ENCODE measurements at regions of chr1 and their contacts with region 1.

Region 1: GRCh38 chr1:62746085-62746808 is 37.7 kb upstream of the ATG4C start:
- DNase-seq: peak; percentile 58
- H3K4me3 ChIP-seq: no peak overlapping the region
- H3K27ac ChIP-seq: no peak overlapping the region
- H3K4me1 ChIP-seq: no peaks in the 10 kb centered on the region
- H3K27me3 ChIP-seq: no peaks in the 10 kb centered on the region
- CTCF ChIP-seq: peak; percentile 30 to 31
- POLR2A ChIP-seq: no peak

Region 2: DNA sequence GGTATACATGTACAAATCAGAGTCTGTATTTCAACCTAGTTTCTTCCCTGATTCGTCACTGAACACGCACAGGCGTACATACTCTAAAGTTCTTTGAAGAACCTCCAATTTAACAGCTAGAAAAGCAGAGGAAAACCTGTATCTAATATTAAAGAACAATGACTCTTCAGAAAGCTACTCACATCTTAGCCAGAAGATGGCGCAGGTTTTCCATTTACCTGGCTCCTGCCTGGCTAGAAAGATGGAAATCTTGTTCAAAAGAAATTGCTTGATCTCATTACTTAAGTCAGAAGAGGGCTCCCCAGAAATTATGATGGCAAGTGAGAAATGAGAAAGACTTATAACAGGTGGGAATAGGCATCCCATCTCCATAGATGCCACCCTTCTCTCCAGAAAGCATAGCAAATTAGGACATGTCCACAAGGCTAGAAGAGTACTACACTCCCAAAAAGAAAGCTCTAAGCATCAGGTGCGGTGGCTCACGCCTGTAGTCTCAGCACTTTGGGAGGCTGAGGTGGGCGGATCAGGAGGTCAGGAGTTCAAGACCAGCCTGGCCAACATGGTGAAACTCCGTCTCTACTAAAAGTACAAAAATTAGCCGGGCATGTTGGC is 570.6 kb before region 1 on chr1:
- CTCF ChIA-PET with region 1: interaction called, 109 read pairs
- POLR2A ChIA-PET with region 1: no interaction called
- dilution Hi-C with region 1: no loop called
- intact Hi-C with region 1: loop called (anchors 1 kb)
- DNase-seq: peak; percentile 49
- H3K4me3 ChIP-seq: no peak overlapping the region
- H3K27ac ChIP-seq: no peak overlapping the region
- H3K4me1 ChIP-seq: no peaks in the 10 kb centered on the region
- H3K27me3 ChIP-seq: no peaks in the 10 kb centered on the region
- CTCF ChIP-seq: peak; percentile 51 to 67
- POLR2A ChIP-seq: no peak

Region 3: DNA sequence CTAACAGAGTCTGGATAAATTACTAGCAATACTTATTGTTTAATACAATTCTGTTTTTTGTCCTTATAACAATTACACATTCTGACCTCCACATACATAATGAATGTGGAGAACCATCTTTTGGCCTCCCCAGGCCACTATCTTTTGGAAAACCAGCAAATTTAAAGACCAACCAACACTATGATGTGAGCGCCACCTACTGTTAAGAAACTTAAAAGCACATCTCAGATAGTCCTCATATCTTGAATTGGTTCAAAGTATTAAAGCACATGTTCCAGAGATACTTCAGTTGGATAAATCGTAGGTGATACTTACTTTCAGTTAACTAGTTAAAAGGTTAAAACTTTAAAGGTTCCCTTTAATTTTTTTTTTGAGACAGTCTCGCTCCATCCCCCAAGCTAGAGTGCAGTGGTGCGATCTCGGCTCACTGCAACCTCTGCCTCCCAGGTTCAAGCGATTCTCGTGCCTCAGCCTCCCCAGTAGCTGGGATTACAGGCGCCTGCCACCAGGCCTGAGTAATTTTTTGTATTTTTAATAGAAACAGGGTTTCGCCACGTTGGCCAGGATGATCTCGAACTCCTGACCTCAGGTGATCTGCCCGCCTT is 338.7 kb before region 1 on chr1:
- CTCF ChIA-PET with region 1: interaction called, 8 read pairs
- POLR2A ChIA-PET with region 1: no interaction called
- dilution Hi-C with region 1: no loop called
- intact Hi-C with region 1: loop called (anchors 1 kb)
- DNase-seq: peak; percentile 46
- H3K4me3 ChIP-seq: no peak overlapping the region
- H3K27ac ChIP-seq: no peak overlapping the region
- H3K4me1 ChIP-seq: no peaks in the 10 kb centered on the region
- H3K27me3 ChIP-seq: no peaks in the 10 kb centered on the region
- CTCF ChIP-seq: peak; percentile 55 to 56
- POLR2A ChIP-seq: no peak

Region 4: GRCh38 chr1:62508187-62508758 is 238.0 kb before region 1 on chr1:
- CTCF ChIA-PET with region 1: interaction called, 195 read pairs
- POLR2A ChIA-PET with region 1: no interaction called
- dilution Hi-C with region 1: no loop called
- intact Hi-C with region 1: loop called (anchors 1 kb)
- DNase-seq: peak; percentile 56
- H3K4me3 ChIP-seq: no peak overlapping the region
- H3K27ac ChIP-seq: no peak overlapping the region
- H3K4me1 ChIP-seq: no peaks in the 10 kb centered on the region
- H3K27me3 ChIP-seq: no peaks in the 10 kb centered on the region
- CTCF ChIP-seq: peak; percentile 31 to 46
- POLR2A ChIP-seq: no peak

Region 5: DNA sequence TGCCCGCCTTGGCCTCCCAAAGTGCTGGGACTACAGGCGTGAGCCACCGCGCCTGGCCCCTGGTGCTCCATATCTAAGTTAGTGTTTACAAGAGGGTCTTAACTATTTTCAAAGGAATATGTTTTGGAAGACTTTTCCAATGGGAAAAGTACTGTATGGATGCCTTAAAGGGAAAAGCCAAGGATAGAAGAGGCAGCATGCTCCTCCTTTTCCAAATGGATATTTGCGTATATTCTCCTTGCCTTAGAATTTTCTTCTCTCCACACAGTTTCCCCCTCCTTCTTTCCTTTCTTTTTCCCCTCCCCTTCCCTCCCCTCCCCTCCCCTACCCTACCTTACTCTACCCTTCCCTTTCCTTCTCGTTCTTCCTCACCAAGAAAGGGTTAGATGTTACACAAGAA is 28.8 kb before region 1 on chr1:
- CTCF ChIA-PET with region 1: no interaction called
- POLR2A ChIA-PET with region 1: no interaction called
- dilution Hi-C with region 1: no loop called
- intact Hi-C with region 1: no loop called
- DNase-seq: no peak
- H3K4me3 ChIP-seq: no peak overlapping the region
- H3K27ac ChIP-seq: no peak overlapping the region
- H3K4me1 ChIP-seq: peaks cover 5% of the 10 kb centered on the region
- H3K27me3 ChIP-seq: peaks cover 2 to 6% of the 10 kb centered on the region in 2 experiments
- CTCF ChIP-seq: no peak
- POLR2A ChIP-seq: no peak

Region 6: GRCh38 chr1:62735491-62736171 is 10.6 kb before region 1 on chr1:
- CTCF ChIA-PET with region 1: interaction called, 14 read pairs
- POLR2A ChIA-PET with region 1: no interaction called
- dilution Hi-C with region 1: no loop called
- intact Hi-C with region 1: no loop called
- DNase-seq: no peak
- H3K4me3 ChIP-seq: no peak overlapping the region
- H3K27ac ChIP-seq: no peak overlapping the region
- H3K4me1 ChIP-seq: no peaks in the 10 kb centered on the region
- H3K27me3 ChIP-seq: peaks cover 0 to 6% of the 10 kb centered on the region in 2 experiments
- CTCF ChIP-seq: no peak
- POLR2A ChIP-seq: no peak